Activated CD8-positive, alpha-beta T cell treated with anti-CD3 and anti-CD28 coated beads, Interleukin-2, amount 10 ng/mL, durations not matched to agents 7 days and 5 days (primary cell): ENCODE measurements at regions of chr6 and their contacts with region 1.

Region 1: DNA sequence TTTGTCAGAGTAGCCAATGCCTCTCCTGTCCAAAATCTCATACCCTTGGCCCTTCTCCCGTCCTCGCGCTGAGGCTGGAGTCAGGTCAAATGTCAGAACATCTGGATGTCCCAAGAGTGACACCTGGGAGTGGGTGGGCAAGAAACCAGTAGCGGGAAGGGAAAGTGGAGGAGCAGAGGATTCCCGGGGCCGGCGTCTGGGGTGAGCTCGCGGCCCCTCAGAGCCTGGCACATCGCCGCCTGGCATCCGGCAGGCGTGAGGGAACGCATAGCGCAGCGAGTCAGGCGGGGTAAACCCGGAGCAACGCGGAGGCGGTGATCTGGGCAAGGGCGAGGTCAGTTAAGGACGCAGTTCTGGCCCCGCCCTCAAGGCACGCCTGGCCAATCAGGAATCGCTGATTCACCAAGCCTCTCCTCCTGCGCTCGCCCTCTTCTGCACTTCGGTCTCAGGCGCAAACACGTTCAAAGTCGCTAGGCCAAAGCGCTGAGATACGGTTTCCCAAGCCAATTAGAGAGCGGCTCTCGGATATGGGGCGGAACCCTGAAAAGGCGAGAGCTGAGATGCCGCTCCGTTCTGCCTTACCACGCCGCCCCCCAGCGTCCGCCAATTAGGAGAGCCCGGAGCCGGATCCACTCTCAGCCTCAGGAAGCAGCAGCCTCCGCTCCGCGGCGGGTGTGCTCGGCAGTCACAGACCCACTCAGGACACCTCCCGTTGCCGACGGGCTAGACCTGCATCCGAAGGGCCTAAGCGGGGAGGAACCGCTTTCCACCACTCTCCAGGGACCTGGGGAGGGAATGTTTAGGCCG is 22.5 kb downstream of the VPS52 start:
- DNase-seq: peak; percentile 98
- ATAC-seq: peak; percentile 95
- H3K4me3 Mint-ChIP-seq: peak overlapping the region; percentile 88
- H3K27ac Mint-ChIP-seq: peak overlapping the region; percentile 92
- H3K4me1 Mint-ChIP-seq: peaks cover 37% of the 10 kb centered on the region
- H3K27me3 Mint-ChIP-seq: peaks cover 3% of the 10 kb centered on the region

Region 2: DNA sequence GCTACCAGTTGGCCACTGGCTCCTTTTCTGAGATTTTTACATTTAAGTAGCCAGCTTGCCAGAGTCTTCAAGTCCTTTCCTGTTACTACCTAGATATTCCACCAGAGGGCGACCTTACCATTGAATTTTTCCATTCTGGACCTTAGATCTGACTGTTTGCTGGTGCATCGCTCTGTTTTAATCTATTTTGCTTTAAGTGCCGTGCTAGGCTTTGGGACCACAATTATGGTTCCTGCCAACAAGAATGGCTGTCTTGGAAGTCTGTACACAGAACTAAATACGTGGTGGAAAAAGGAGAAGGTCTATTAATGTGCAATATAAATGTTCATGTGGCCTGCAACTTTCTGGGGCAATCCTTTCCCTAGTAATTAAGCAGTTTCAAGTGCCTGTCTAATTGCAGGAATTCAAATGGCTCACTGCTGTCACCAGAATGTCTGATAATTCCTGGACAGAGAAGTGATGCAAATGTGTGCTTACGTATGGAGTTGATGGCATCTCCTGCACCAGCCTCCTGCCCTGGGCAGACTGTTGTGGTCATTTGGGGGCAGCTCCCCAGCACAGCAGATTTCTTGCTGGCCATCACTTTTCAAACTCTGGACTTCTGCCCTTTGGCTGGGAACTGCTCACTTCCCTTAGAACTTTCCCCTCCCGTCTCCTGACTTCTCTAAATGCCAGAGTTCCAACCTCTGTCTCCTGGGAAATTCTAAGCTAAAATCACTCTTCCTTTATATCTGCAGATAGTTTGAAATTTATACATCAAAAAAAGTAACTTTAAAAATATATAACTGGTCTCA is 234.1 kb before region 1 on chr6:
- CTCF ChIA-PET with region 1: interaction called, 22 read pairs
- POLR2A ChIA-PET with region 1: no interaction called
- DNase-seq: peak; percentile 78
- ATAC-seq: peak; percentile 57
- H3K4me3 Mint-ChIP-seq: no peak overlapping the region
- H3K27ac Mint-ChIP-seq: no peak overlapping the region
- H3K4me1 Mint-ChIP-seq: peaks cover 28% of the 10 kb centered on the region
- H3K27me3 Mint-ChIP-seq: peaks cover 6% of the 10 kb centered on the region

Region 3: DNA sequence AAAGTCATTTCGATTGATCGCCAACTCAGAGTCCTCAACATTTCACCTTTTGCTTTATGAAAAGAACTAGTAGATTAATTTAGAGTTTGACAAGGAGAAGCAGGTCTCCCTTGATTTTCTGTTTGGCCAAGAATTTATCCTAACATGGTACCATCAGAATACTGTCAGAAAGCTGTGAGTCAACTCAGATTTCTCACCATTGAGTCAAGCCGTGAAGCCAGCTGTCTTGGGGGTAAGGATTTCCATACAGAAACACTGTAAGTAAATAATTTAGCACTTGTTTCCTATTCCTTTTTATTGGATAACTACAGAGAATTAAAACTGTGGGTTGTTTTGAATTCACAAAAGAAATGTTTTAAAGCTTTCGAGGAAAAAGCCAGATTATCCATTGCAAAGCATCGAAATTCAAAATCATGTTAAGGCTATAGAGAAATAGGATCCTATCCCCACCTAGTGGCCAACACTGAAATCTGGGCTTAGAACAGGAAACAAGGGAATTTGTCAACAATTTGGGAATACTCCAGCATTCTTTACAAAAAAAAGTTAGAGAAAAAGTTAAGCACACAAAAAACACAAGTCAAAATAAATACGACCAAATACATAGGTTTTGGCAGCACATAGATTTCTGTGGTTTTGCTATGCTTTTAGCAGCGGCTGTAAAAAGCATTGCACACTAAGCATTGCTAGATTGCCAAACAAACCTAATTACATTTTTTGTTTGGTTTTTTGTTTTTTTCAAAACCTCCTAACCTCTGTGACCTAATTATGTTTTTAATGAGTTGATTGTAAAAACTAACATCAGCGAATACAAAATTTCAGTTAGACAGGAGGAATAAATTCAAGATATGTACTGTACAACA is 101.1 kb before region 1 on chr6:
- CTCF ChIA-PET with region 1: interaction called, 19 read pairs
- POLR2A ChIA-PET with region 1: no interaction called
- DNase-seq: no peak
- ATAC-seq: no peak
- H3K4me3 Mint-ChIP-seq: no peak overlapping the region
- H3K27ac Mint-ChIP-seq: no peak overlapping the region
- H3K4me1 Mint-ChIP-seq: peaks cover 7% of the 10 kb centered on the region
- H3K27me3 Mint-ChIP-seq: peaks cover 20% of the 10 kb centered on the region

Region 4: GRCh38 chr6:33172688-33173534 is 76.2 kb before region 1 on chr6:
- CTCF ChIA-PET with region 1: interaction called, 13 read pairs
- POLR2A ChIA-PET with region 1: no interaction called
- DNase-seq: no peak
- ATAC-seq: no peak
- H3K4me3 Mint-ChIP-seq: no peak overlapping the region
- H3K27ac Mint-ChIP-seq: no peak overlapping the region
- H3K4me1 Mint-ChIP-seq: no peaks in the 10 kb centered on the region
- H3K27me3 Mint-ChIP-seq: no peaks in the 10 kb centered on the region

Region 5: DNA sequence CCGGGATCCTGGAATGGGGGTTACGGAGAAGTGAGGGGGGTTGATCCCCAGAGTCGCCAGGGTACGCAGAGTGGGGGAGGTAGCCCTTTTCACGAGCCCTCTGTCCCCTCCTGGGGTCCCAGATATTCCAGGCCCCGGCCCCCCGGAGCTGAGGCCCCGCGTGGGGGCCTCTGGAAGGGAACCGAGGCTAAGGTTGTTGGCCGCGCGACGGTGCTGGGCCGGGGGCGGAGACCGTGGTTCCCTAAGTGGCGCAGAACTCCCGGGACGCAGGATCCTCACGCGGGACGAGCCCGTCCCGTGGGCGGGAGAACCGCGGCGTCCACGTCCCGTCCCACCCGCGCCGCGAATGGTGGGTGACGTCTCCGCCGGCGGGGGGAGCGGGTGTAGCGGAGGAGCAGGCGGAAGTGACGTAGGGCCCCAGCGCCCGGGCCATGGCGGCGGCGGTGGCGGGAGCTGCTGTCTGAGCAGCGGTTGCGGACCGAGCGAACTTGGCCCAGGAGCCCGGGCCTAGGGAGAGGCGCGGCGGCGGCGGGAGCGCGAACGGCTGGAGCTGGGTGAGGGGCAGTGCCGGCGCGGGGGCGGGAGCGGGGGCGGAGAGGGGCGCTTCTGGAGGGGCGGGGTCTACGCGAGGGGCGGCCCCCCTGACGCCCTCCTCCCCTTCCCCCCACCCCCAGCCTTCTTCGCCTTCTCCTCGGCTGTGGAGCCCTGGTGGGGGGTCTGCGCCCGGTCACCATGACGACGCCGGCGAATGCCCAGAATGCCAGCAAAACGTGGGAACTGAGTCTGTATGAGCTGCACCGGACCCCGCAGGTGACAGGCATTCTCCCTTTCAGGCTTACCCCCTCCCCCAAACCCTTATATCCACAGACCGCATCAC is 40.8 kb before region 1 on chr6 and contains the start of gene RING1:
- CTCF ChIA-PET with region 1: interaction called, 28 read pairs
- POLR2A ChIA-PET with region 1: interaction called, 12 read pairs
- DNase-seq: peak; percentile 90
- ATAC-seq: peak; percentile 60
- H3K4me3 Mint-ChIP-seq: peak within 1 kb of the TSS; percentile 80
- H3K27ac Mint-ChIP-seq: peak within 1 kb of the TSS; percentile 87
- H3K4me1 Mint-ChIP-seq: peaks cover 64% of the 10 kb centered on the region
- H3K27me3 Mint-ChIP-seq: peaks cover 4% of the 10 kb centered on the region
- total RNA-seq, gene RING1: 39.8 to 44.6 TPM

Region 6: DNA sequence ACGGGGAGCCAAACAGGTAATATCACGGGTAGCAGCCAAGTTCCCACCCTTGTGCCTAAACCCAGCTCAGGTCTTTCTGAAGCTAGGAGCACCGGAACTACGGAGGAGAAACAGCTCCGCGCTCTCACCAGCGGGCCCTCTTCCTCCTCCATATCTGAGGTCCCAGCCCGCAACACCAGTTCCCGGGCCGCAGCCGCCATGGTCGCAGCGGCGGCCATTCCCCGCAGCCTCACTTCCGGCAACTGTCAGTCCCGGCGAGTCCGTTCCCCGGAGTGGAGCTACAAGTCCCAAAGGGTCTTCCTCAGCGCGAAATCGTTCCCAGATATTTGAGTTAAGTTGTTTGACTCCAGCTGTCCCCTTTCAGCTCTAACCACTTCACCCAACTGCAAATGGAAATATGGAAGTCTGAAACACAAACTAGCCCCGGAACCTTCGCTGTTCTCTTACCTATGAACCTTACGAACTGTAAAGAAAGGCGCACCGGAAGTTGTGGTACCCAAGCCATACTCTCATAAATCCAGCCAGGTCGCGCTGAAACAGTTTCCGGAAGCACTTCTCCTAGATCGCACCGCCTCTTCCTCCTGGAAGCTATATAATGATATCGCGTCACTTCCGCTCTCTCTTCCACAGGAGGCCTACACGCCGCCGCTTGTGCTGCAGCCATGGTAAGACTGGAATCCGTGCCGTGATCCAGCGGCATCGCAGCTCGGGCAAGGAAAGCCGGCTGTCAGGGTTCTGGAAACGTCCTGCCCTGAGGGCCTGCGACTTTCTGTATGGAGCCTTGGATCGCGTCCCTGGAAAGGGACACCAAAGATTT is 22.5 kb after region 1 on chr6 and contains the starts of genes RPS18 and VPS52:
- CTCF ChIA-PET with region 1: interaction called, 15 read pairs
- POLR2A ChIA-PET with region 1: interaction called, 30 read pairs
- DNase-seq: peak; percentile 96
- ATAC-seq: peak; percentile 84
- H3K4me3 Mint-ChIP-seq: peak within 1 kb of the TSS; percentile 99
- H3K27ac Mint-ChIP-seq: peak within 1 kb of the TSS; percentile 100
- H3K4me1 Mint-ChIP-seq: peaks cover 52% of the 10 kb centered on the region
- H3K27me3 Mint-ChIP-seq: no peaks in the 10 kb centered on the region
- total RNA-seq, gene RPS18: 2,792 to 2,813 TPM
- total RNA-seq, gene VPS52: 59.3 to 59.5 TPM